Head of caudate nucleus (tissue), 42 donors: ENCODE measurements at regions of chr15 and their contacts with region 1.

Region 1: DNA sequence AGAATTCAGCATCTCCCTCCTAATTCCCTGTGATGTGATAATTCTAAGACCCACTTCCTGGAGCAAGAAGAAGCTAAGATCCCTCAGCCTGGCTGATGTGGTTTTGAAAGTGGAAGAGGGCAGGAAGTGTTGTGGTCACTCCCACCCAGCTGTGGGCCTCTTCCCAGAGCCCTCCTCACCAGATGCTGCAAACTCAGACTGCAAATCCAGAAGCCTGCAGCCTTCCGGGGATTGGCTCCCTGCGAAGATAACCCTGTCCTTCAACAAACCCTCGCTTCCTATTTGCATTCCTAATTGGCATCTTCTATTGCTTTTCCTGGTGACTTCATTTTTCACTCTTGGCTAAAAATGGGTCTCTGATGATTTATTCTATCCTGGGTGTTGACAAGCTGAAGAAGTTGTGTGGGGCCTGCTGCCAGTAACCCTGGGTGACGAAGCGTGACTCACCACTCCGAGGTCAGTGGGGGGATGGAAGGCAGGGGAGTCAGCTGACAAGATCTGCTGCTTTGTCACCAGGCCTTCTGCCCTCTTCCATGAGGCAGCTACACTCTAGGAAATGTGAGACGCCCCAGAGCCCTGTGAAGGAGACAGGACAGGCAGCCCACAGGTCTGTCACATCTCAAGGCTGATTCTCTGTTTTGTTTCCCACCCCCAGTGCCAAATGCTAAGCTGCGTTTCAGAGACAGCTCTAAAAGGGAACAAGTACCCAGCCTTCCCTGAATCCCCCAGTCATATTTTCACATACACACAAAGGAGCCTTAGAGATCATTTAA is 99.7 kb upstream of the LIPC start:
- DNase-seq: peak; percentile 84 to 97 (median 92)

Region 2: DNA sequence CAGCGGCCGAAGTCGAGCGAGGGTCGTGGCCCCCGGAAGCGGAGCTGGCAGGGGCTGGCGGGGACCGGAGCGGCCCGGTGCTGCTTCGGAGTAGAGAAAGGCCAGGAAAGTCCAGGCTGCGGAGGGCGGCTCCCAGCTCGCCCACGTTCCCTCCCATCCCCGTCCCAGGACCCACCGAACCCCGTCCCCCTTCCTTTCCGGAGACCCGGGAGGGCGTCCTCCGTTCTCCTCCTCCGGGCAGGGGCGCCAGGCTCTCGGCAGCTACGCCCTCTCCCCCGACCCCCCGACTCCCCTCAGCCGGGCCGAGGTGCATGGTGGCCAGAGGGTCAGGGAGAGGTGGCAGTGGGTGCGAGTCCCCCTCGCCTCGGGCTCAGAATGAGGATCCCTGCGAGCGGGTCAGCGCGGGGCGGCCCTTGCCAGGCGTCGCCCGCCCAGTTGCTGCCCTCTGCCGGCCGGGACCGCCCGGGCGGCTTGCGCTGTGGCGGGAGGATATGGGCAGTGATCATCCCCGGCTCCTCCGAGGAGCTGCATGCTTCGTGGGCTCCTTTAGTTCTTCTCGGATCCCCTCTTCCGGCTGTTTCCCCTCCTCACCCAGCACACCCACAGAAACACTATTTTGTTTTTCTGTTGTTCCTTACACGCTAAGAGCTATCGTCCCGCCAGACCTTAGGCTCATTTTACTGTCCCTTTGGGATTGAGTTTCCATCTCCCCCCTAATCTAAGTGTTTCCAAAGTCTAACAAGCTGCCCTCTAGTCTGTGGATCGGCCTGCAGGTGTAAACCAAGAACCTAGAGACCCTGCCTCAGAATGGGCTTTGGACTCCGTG is 265.8 kb before region 1 on chr15:
- intact Hi-C with region 1: no loop called
- DNase-seq: peak in 37 of 42 donors; percentile 5 to 75 (median 40)

Region 3: DNA sequence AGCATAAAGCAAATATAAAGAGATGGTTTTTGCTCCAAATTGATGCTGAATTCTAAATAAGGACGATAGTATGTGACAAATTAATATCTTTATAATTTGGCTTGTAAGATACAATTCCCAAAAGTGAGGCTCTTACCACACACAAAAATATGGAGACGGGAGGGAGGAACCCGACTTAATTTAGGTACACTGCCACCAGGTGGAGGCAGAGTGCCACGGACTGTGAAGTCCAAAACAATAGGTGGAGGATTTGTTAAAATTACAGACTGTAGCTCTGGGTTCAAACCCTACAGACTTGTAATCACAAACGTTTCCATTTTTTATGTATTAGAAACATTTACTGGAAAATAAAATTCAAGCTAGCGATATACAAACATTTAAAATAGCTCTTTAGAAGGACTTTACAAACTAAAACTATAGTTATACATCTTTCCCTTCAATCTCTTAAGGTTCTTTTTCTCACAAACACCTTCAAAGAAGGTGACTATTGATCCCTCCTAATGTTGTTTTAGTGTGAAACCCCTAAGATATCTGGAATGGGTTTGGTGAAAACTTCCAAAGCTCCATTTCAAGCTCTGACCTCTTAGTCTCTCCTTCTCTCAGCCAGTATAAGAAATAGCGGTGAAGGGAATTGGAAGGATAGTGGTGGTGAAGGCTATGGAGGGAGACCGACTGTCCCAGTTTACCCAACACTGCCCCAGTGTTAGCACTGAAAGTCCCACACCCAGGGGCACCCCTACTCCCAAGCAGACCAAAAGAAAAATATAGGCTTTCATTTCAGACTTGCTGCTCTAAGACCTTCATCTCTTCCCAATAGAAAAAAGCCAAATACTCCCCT is 104.2 kb before region 1 on chr15:
- intact Hi-C with region 1: loop called (anchors 10 kb)
- DNase-seq: peak; percentile 59 to 95 (median 84)